Sigmoid colon (tissue), 7 donors: ENCODE measurements at regions of chr4 and their contacts with region 1.

Region 1: DNA sequence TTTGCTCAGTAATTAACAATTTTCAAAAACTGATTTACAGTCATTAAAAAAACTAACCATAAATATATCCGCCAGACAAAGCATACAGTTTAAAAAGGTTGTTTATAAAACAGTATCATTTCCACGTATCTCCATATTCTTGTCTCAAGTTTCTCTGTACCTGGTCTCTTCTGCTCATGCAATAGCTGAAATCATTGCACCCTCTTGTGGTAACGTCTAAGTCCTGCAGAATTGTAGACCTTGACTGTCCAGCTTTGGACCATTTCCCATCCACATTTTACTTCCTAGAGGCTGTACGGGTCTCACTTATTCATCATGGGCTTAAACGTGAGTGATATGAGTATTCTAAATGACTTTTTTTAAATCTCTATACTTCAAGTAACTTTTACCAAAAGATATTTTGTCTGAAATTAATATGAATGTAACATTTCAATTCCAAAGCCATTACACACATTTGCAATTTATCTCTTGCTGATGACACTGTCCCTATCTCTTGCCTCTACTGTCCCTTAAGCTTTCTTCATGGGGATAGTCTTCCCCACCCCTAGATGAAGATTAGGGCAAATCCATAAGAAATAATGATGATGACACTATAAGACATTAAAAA is 118.5 kb downstream of the BTC start:
- DNase-seq: no peak
- H3K4me3 ChIP-seq: no peak overlapping the region
- H3K27ac ChIP-seq: no peak overlapping the region
- H3K4me1 ChIP-seq: peaks cover 0 to 9% (median 3%) of the 10 kb centered on the region in 4 donors
- H3K27me3 ChIP-seq: no peaks in the 10 kb centered on the region
- CTCF ChIP-seq: peak; percentile 50 to 69 (median 62)
- EP300 ChIP-seq: no peak
- POLR2A ChIP-seq: no peak

Region 2: GRCh38 chr4:74189331-74190043 is 486.3 kb before region 1 on chr4:
- intact Hi-C with region 1: loop called (anchors 10 kb)
- DNase-seq: no peak
- H3K4me3 ChIP-seq: no peak overlapping the region
- H3K27ac ChIP-seq: no peak overlapping the region
- H3K4me1 ChIP-seq: no peaks in the 10 kb centered on the region
- H3K27me3 ChIP-seq: no peaks in the 10 kb centered on the region
- CTCF ChIP-seq: peak in 3 of 4 experiments; percentile 21 to 33 (median 32)
- EP300 ChIP-seq: no peak
- POLR2A ChIP-seq: no peak

Region 3: GRCh38 chr4:74376888-74377483 is 298.8 kb before region 1 on chr4:
- intact Hi-C with region 1: loop called (anchors 1 kb)
- DNase-seq: no peak
- H3K4me3 ChIP-seq: no peak overlapping the region
- H3K27ac ChIP-seq: no peak overlapping the region
- H3K4me1 ChIP-seq: peaks cover 0 to 4% (median 0%) of the 10 kb centered on the region in 4 donors
- H3K27me3 ChIP-seq: no peaks in the 10 kb centered on the region
- CTCF ChIP-seq: peak in 3 of 4 experiments; percentile 44 to 55 (median 53)
- EP300 ChIP-seq: no peak
- POLR2A ChIP-seq: no peak

Region 4: GRCh38 chr4:74793757-74794340 is 118.1 kb after region 1 on chr4:
- intact Hi-C with region 1: loop called (anchors 5 kb)
- DNase-seq: peak; percentile 81
- H3K4me3 ChIP-seq: peak overlapping the region; percentile 65 to 74 (median 68)
- H3K27ac ChIP-seq: peak overlapping the region; percentile 89 to 95 (median 92)
- H3K4me1 ChIP-seq: peaks cover 0 to 33% (median 26%) of the 10 kb centered on the region in 4 donors
- H3K27me3 ChIP-seq: no peaks in the 10 kb centered on the region
- CTCF ChIP-seq: peak; percentile 9 to 55 (median 42)
- EP300 ChIP-seq: no peak
- POLR2A ChIP-seq: no peak